Brain microvascular endothelial cell (primary cell): ENCODE measurements at regions of chr18 and their contacts with region 1.

Region 1: GRCh38 chr18:59631583-59632181 is 65.5 kb downstream of the CCBE1 start:
- DNase-seq: no peak
- H3K4me3 ChIP-seq: no peak overlapping the region
- H3K27ac ChIP-seq: no peak overlapping the region
- H3K27me3 ChIP-seq: no peaks in the 10 kb centered on the region
- CTCF ChIP-seq: peak; percentile 87

Region 2: DNA sequence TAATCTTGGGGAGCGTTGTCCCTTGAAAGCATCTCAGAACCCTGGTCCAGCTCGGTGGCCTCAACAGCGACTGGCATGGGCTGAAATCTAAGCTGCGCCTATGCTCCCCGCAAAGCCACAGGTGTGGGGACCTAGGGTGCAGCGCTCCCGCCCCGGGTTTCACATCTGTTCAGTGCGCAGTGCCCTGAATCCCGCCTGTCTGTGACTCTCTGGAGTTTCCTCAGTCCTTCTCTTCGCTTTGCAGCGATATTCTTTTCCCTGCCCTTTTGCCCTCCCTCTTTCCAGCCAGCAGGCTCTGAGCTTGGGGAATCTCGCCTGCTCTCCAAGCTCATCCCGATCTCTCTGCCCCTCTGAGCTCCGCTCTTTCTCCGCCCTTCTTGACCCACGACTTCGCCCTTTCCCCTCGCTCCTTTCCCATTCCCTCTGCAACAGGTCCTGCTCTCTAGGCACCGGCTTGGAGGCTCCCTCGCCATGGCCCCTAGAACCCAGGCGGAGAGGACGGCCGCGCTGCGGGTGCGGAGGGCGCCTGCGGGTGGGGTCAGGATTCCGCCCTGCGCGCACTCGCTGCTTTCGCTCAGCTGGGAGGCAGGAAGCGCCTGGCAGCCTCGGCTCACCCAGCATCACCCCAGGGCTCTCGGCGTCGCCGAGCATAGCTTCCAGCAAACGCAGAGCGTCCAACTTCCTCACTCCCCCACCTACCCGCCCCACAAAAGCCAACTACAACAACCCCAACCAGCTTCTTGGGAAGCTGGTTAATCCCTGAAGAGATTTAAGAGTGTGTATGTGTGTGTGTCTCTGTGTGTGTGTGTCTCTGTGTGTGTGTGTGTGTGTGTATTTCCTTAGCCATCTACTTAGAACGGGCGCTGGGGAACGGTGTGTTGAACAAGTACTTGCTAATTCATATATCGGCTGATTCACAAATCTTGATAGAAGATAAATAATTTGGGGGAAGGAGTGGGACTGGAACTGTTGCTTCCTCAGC is 410.6 kb before region 1 on chr18:
- in situ Hi-C with region 1: no loop called
- DNase-seq: no peak
- H3K4me3 ChIP-seq: no peak overlapping the region
- H3K27ac ChIP-seq: no peak overlapping the region
- H3K27me3 ChIP-seq: peaks cover 67% of the 10 kb centered on the region
- CTCF ChIP-seq: no peak

Region 3: DNA sequence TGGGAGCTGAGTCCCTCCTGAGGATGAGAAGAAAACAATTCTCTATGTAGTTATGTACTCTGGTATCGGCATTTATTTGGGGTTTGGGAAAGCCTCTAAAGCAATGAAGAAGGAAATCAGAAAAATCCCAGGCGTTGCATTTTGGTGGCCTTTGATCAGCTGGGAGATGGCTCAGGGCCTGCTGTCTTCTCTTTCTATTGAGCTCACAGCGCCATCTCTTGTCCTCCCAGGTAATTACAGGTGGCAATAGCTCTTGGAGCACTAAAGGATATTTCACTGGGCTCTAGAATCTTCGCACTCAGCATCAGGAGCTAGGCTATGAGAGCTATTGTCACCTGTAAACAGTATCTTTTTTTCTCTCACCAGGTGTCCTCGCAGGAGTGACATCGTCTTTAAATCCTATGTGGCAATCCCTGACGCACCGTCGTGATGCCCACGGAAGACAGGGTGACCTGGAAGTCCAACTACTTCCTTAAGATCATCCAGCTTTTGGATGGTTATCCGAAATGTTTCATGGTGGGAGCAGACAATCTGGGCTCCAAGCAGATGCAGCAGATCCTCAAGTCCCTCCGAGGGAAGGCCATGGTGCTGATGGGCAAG is 192.0 kb after region 1 on chr18:
- in situ Hi-C with region 1: loop called (anchors 25 kb)
- DNase-seq: peak; percentile 81
- H3K4me3 ChIP-seq: no peak overlapping the region
- H3K27ac ChIP-seq: no peak overlapping the region
- H3K27me3 ChIP-seq: no peaks in the 10 kb centered on the region
- CTCF ChIP-seq: peak; percentile 90